K562 (cell line): ENCODE measurements at regions of chr19 and their contacts with region 1.

Region 1: GRCh38 chr19:6862673-6863078 is 24.7 kb upstream of the ADGRE1 start:
- DNase-seq: peak; percentile 76 to 89 (median 78)
- ATAC-seq: peak; percentile 98
- H3K4me3 ChIP-seq: no peak overlapping the region
- H3K27ac ChIP-seq: no peak overlapping the region
- H3K4me1 ChIP-seq: peaks cover 0 to 17% of the 10 kb centered on the region in 2 experiments; a peak in 3 of 5 replicates
- H3K27me3 ChIP-seq: no peaks in the 10 kb centered on the region; a peak in 1 of 5 replicates
- CTCF ChIP-seq: peak; percentile 93 to 96 (median 96)
- EP300 ChIP-seq: peak; percentile 27; the same call in 1 of the 2 replicates
- POLR2A ChIP-seq: no peak
- RAD21 ChIP-seq: peak; percentile 88 to 95

Region 2: GRCh38 chr19:6125571-6125989 is 737.1 kb before region 1 on chr19:
- CTCF ChIA-PET with region 1: interaction called, 19 read pairs
- POLR2A ChIA-PET with region 1: interaction called, 3 read pairs
- in situ Hi-C with region 1: loop called (anchors 5 kb)
- intact Hi-C with region 1: loop called (anchors 2 kb)
- DNase-seq: peak; percentile 70 to 85 (median 75)
- ATAC-seq: peak; percentile 93
- H3K4me3 ChIP-seq: no peak overlapping the region
- H3K27ac ChIP-seq: no peak overlapping the region
- H3K4me1 ChIP-seq: no peaks in the 10 kb centered on the region
- H3K27me3 ChIP-seq: no peaks in the 10 kb centered on the region
- CTCF ChIP-seq: peak; percentile 94 to 95 (median 95)
- EP300 ChIP-seq: no peak
- POLR2A ChIP-seq: no peak
- RAD21 ChIP-seq: peak; percentile 93 to 99

Region 3: DNA sequence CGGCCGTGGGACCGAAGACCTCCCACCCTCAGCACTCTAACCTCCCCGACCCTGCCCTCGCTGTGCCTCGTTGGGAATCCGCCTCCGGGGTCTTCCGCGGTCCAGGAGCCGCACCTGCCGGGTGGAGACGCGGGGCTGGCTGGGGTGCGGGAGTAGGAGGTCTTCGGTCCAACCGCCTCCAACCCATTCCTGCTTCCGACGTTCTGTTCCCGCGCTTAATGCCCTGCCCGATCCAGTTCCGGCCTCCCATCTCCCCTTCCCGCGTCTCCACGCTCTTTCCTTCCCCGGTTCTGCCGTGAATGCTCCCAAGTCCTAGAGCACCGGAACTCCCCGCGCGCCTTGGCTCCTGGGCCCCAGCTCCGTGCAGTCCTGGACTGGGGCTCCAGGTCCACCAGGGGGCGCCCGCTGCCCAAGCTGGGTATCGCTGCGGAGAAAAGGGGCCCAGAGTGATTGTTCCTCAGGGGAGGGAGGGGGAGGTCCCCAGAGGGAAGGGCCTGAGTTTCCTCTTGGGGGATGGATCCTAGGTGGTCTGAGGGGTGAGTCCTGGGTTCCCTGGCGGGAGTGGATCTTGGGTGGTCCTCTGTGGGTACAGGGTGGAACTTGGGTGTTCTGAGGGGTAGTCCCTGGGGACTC is 345.9 kb before region 1 on chr19:
- CTCF ChIA-PET with region 1: interaction called, 9 read pairs
- POLR2A ChIA-PET with region 1: no interaction called
- in situ Hi-C with region 1: loop called (anchors 10 kb)
- intact Hi-C with region 1: loop called (anchors 2 kb)
- DNase-seq: peak; percentile 86 to 94 (median 90)
- ATAC-seq: peak; percentile 95
- H3K4me3 ChIP-seq: peak overlapping the region; percentile 54
- H3K27ac ChIP-seq: peak overlapping the region; percentile 83
- H3K4me1 ChIP-seq: peaks cover 7 to 38% of the 10 kb centered on the region in 2 experiments; a peak in 4 of 5 replicates
- H3K27me3 ChIP-seq: no peaks in the 10 kb centered on the region
- CTCF ChIP-seq: peak; percentile 96 to 97 (median 96)
- EP300 ChIP-seq: no peak; the same call in 1 of the 2 replicates
- POLR2A ChIP-seq: peak; percentile 59; the same call in 1 of the 2 replicates
- RAD21 ChIP-seq: peak; percentile 97 to 98

Region 4: DNA sequence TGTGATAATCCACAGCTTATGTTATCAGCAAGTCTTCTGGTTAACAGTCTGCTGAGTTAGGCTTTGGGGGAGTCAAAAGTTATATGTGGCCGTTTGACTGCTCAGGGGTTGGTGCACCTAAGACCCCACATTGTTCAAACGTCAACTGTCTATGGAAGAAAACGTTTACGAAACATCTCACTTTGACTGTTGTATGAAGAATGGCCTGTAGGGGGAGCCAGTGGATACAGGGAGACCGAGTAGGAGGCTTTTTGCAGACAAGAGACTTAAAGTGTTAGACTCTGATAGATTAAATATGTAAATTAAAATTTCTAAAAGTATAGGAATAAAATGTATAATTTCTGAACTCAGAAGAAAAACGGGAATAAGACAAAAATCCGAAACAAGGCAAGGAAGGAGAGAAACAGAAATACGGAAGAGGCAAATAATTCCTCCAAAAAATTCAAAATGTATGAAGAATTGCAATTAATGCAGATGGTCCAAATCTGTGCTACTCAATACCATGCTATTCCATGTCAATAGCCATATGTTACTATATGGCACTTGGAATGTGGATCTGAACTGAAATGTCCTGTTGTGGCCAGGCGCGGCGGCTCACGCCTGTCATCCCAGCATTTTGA is 230.6 kb before region 1 on chr19:
- CTCF ChIA-PET with region 1: interaction called, 19 read pairs
- POLR2A ChIA-PET with region 1: no interaction called
- in situ Hi-C with region 1: no loop called
- intact Hi-C with region 1: loop called (anchors 1 kb)
- DNase-seq: peak; percentile 52 to 85 (median 75)
- ATAC-seq: peak; percentile 80
- H3K4me3 ChIP-seq: no peak overlapping the region
- H3K27ac ChIP-seq: no peak overlapping the region
- H3K4me1 ChIP-seq: peaks cover 0 to 3% of the 10 kb centered on the region in 2 experiments; a peak in 1 of 5 replicates
- H3K27me3 ChIP-seq: no peaks in the 10 kb centered on the region
- CTCF ChIP-seq: peak; percentile 75 to 89 (median 81)
- EP300 ChIP-seq: no peak
- POLR2A ChIP-seq: no peak
- RAD21 ChIP-seq: peak; percentile 70 to 83

Region 5: GRCh38 chr19:6767357-6768235 is 95.1 kb before region 1 on chr19 and contains the start of gene SH2D3A:
- CTCF ChIA-PET with region 1: no interaction called
- POLR2A ChIA-PET with region 1: no interaction called
- in situ Hi-C with region 1: no loop called
- intact Hi-C with region 1: loop called (anchors 10 kb)
- DNase-seq: peak; percentile 95 to 97 (median 96)
- ATAC-seq: peak; percentile 95
- H3K4me3 ChIP-seq: peak within 1 kb of the TSS; percentile 64
- H3K27ac ChIP-seq: peak within 1 kb of the TSS; percentile 65
- H3K4me1 ChIP-seq: peaks cover 9 to 29% of the 10 kb centered on the region in 2 experiments
- H3K27me3 ChIP-seq: no peaks in the 10 kb centered on the region
- CTCF ChIP-seq: no peak
- EP300 ChIP-seq: no peak
- POLR2A ChIP-seq: peak; percentile 87; the same call in 1 of the 2 replicates
- RAD21 ChIP-seq: no peak
- polyA plus RNA-seq, gene SH2D3A: 0.75 to 0.83 TPM

Region 6: GRCh38 chr19:6811906-6812305 is 50.8 kb before region 1 on chr19:
- CTCF ChIA-PET with region 1: no interaction called
- POLR2A ChIA-PET with region 1: no interaction called
- in situ Hi-C with region 1: no loop called
- intact Hi-C with region 1: no loop called
- DNase-seq: peak; percentile 69 to 82 (median 78)
- ATAC-seq: peak; percentile 92
- H3K4me3 ChIP-seq: no peak overlapping the region
- H3K27ac ChIP-seq: no peak overlapping the region
- H3K4me1 ChIP-seq: no peaks in the 10 kb centered on the region; a peak in 1 of 5 replicates
- H3K27me3 ChIP-seq: no peaks in the 10 kb centered on the region
- CTCF ChIP-seq: 0 out of 6 replicates have a peak, but pooled peaks of 1 of the 3 experiments have one; percentile 3
- EP300 ChIP-seq: no peak
- POLR2A ChIP-seq: no peak
- RAD21 ChIP-seq: no peak

Region 7: GRCh38 chr19:6828698-6829562 is 33.7 kb before region 1 on chr19:
- CTCF ChIA-PET with region 1: no interaction called
- POLR2A ChIA-PET with region 1: no interaction called
- in situ Hi-C with region 1: no loop called
- intact Hi-C with region 1: no loop called
- DNase-seq: peak; percentile 87 to 90 (median 88)
- ATAC-seq: peak; percentile 96
- H3K4me3 ChIP-seq: peak overlapping the region; percentile 31
- H3K27ac ChIP-seq: peak overlapping the region; percentile 48; the same call in 1 of the 3 replicates
- H3K4me1 ChIP-seq: peaks cover 7 to 31% of the 10 kb centered on the region in 2 experiments; a peak in 4 of 5 replicates
- H3K27me3 ChIP-seq: no peaks in the 10 kb centered on the region
- CTCF ChIP-seq: no peak
- EP300 ChIP-seq: no peak
- POLR2A ChIP-seq: no peak
- RAD21 ChIP-seq: no peak

Region 8: DNA sequence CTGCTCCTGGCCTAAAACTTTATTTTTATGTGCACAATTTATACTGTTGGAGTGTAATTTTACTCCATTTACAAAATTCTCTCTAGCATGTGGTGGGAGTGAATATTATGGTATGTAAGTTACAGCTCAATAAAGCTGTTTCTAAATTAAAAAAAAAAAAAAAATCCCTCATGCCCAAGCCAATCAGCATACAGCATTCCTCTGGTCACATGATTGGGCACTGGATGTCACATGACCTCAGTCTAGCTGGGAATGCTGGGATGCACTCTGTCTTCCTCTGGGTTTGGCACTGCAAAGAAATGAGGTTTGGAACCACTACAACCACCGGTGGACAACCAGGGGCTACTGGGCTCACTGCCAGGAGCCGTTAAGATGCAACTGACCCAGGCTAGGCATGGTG is 274.4 kb after region 1 on chr19:
- CTCF ChIA-PET with region 1: no interaction called
- POLR2A ChIA-PET with region 1: no interaction called
- in situ Hi-C with region 1: no loop called
- intact Hi-C with region 1: no loop called
- DNase-seq: peak in 2 of 4 experiments; percentile 19 to 29
- ATAC-seq: no peak
- H3K4me3 ChIP-seq: no peak overlapping the region
- H3K27ac ChIP-seq: no peak overlapping the region
- H3K4me1 ChIP-seq: no peaks in the 10 kb centered on the region
- H3K27me3 ChIP-seq: peaks cover under 1 to 2% of the 10 kb centered on the region in 2 experiments; a peak in 2 of 5 replicates
- CTCF ChIP-seq: no peak
- EP300 ChIP-seq: no peak
- POLR2A ChIP-seq: no peak
- RAD21 ChIP-seq: no peak